ENCODE measurements at regions of chr16 and their contacts with region 1.

Region 1: GRCh38 chr16:20741554-20742285 is at the start of gene THUMPD1:
- DNase-seq: peak; percentile 88 to 97 (median 95)
- ATAC-seq: peak; percentile 97
- H3K4me3 ChIP-seq: peak within 1 kb of the TSS; percentile 100
- H3K4me3 Mint-ChIP-seq: peak within 1 kb of the TSS; percentile 93 to 98 (median 96)
- H3K27ac ChIP-seq: peak within 1 kb of the TSS; percentile 93
- H3K27ac Mint-ChIP-seq: peak within 1 kb of the TSS; percentile 90 to 99 (median 98)
- H3K4me1 ChIP-seq: peaks cover 12 to 25% of the 10 kb centered on the region in 2 donors
- H3K4me1 Mint-ChIP-seq: peaks cover 10 to 35% (median 26%) of the 10 kb centered on the region in 7 donors
- H3K27me3 ChIP-seq: no peaks in the 10 kb centered on the region
- H3K27me3 Mint-ChIP-seq: peaks cover 0 to 2% (median 0%) of the 10 kb centered on the region in 5 donors
- total RNA-seq, gene THUMPD1: 41.9 to 107 (median 72.5) TPM

Region 2: GRCh38 chr16:20014034-20014433 is 727.7 kb before region 1 on chr16:
- CTCF ChIA-PET with region 1: no interaction called
- POLR2A ChIA-PET with region 1: no interaction called
- intact Hi-C with region 1: no loop called
- DNase-seq: no peak
- ATAC-seq: no peak
- H3K4me3 ChIP-seq: no peak overlapping the region
- H3K4me3 Mint-ChIP-seq: no peak overlapping the region
- H3K27ac ChIP-seq: no peak overlapping the region
- H3K27ac Mint-ChIP-seq: no peak overlapping the region
- H3K4me1 ChIP-seq: no peaks in the 10 kb centered on the region
- H3K4me1 Mint-ChIP-seq: no peaks in the 10 kb centered on the region
- H3K27me3 ChIP-seq: no peaks in the 10 kb centered on the region
- H3K27me3 Mint-ChIP-seq: peaks cover 0 to 29% (median 17%) of the 10 kb centered on the region in 5 donors

Region 3: GRCh38 chr16:20675488-20676267 is 66.0 kb before region 1 on chr16:
- CTCF ChIA-PET with region 1: interaction called, 3 read pairs
- POLR2A ChIA-PET with region 1: interaction called, 13 read pairs
- intact Hi-C with region 1: loop called (anchors 1 to 2 kb)
- DNase-seq: peak in 7 of 9 donors; percentile 23 to 48 (median 41)
- ATAC-seq: peak; percentile 73
- H3K4me3 ChIP-seq: peak overlapping the region; percentile 72
- H3K4me3 Mint-ChIP-seq: peak overlapping the region; percentile 76 to 96 (median 91)
- H3K27ac ChIP-seq: peak overlapping the region; percentile 69
- H3K27ac Mint-ChIP-seq: peak overlapping the region; percentile 80 to 97 (median 91)
- H3K4me1 ChIP-seq: peaks cover 15 to 20% of the 10 kb centered on the region in 2 donors
- H3K4me1 Mint-ChIP-seq: peaks cover 20 to 47% (median 38%) of the 10 kb centered on the region in 7 donors
- H3K27me3 ChIP-seq: no peaks in the 10 kb centered on the region
- H3K27me3 Mint-ChIP-seq: no peaks in the 10 kb centered on the region

Region 4: GRCh38 chr16:20763461-20764232 is 21.9 kb after region 1 on chr16 and contains the start of gene ACSM3:
- CTCF ChIA-PET with region 1: interaction called, 3 read pairs
- POLR2A ChIA-PET with region 1: interaction called, 19 read pairs
- intact Hi-C with region 1: loop called (anchors 1 kb)
- DNase-seq: peak in 8 of 9 donors; percentile 51 to 84 (median 79)
- ATAC-seq: peak; percentile 99
- H3K4me3 ChIP-seq: peak within 1 kb of the TSS; percentile 72
- H3K4me3 Mint-ChIP-seq: peak within 1 kb of the TSS; percentile 80 to 97 (median 93)
- H3K27ac ChIP-seq: peak within 1 kb of the TSS; percentile 72
- H3K27ac Mint-ChIP-seq: peak within 1 kb of the TSS; percentile 90 to 96 (median 93)
- H3K4me1 ChIP-seq: peaks cover 4 to 13% of the 10 kb centered on the region in 2 donors
- H3K4me1 Mint-ChIP-seq: peaks cover 7 to 46% (median 31%) of the 10 kb centered on the region in 7 donors
- H3K27me3 ChIP-seq: no peaks in the 10 kb centered on the region
- H3K27me3 Mint-ChIP-seq: no peaks in the 10 kb centered on the region
- total RNA-seq, gene ACSM3: 3.0 to 10.9 (median 7.4) TPM

Region 5: DNA sequence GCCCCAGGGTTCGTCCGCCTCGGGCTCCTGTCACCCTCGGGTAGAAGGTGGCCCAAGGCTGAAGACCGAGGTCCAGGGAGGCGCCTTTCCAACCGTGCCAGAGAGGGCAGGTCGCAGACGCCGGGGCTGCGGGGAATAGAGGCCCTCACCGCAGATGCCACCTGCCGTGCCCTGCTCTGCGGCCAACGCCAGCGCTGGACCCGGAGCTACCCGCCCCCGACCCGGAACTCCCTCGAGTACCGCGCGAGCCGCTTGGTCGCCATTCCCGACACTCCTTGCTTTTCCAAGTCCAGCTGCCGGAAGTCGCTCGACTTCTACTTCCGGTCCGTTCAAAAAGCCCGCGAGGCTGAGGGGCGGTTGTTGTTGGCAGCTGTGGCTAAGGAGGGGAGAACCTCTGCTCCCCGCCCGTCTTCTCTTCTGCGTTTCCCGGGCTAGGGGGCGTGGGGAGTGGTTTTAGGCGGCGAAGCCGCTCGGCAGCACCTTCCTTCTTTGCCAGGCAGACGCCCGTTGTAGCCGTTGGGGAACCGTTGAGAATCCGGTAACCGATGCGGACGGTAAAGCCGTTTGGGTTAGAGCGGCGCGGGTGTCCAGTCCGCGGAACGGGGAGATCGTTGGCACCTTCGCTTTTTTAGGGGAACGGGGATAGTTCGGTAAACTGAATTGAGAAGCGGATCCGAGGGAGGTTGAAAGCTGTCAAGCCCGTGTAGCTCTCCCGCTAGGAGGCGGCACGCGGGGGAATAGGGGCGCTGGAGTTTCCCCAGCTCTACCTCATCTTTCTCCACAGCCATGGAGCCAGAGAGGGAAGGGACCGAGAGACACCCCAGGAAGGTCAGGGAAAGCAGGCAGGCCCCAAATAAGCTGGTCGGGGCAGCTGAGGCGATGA is 64.7 kb after region 1 on chr16 and contains the starts of genes ERI2 and REXO5:
- CTCF ChIA-PET with region 1: no interaction called
- POLR2A ChIA-PET with region 1: interaction called, 3 read pairs
- intact Hi-C with region 1: loop called (anchors 1 to 2 kb)
- DNase-seq: peak; percentile 47 to 77 (median 65)
- ATAC-seq: peak; percentile 92
- H3K4me3 ChIP-seq: peak within 1 kb of the TSS; percentile 91
- H3K4me3 Mint-ChIP-seq: peak within 1 kb of the TSS; percentile 93 to 100 (median 96)
- H3K27ac ChIP-seq: peak within 1 kb of the TSS; percentile 73
- H3K27ac Mint-ChIP-seq: peak within 1 kb of the TSS; percentile 60 to 99 (median 93)
- H3K4me1 ChIP-seq: peaks cover 8 to 10% of the 10 kb centered on the region in 2 donors
- H3K4me1 Mint-ChIP-seq: peaks cover 7 to 36% (median 22%) of the 10 kb centered on the region in 7 donors
- H3K27me3 ChIP-seq: no peaks in the 10 kb centered on the region
- H3K27me3 Mint-ChIP-seq: no peaks in the 10 kb centered on the region
- total RNA-seq, gene ERI2: 2.4 to 10.4 (median 3.6) TPM
- total RNA-seq, gene REXO5: 0.35 to 9.5 (median 1.6) TPM

Region 6: DNA sequence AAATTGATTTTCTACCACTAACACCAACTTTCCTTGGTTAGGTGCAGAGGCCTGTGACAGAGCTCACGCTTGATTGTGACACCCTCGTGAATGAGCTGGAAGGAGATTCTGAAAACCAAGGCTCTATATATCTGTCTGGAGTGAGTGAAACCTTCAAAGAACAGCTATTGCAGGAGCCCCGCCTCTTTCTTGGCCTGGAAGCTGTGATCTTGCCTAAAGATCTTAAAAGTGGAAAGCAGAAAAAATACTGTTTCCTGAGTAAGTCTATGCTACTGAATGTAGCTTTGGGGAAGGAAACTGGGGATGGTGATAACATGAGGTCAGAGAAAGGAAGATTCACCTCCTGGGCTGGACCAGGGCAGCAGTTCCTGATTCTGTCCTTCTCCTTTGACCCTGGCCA is 102.9 kb after region 1 on chr16:
- CTCF ChIA-PET with region 1: no interaction called
- POLR2A ChIA-PET with region 1: no interaction called
- intact Hi-C with region 1: loop called in 1 of 2 experiments (anchors 1 kb)
- DNase-seq: peak in 7 of 9 donors; percentile 18 to 42 (median 28)
- ATAC-seq: peak; percentile 67
- H3K4me3 ChIP-seq: peak overlapping the region; percentile 2
- H3K4me3 Mint-ChIP-seq: peak overlapping the region; percentile 26 to 80 (median 55)
- H3K27ac ChIP-seq: peak overlapping the region; percentile 48
- H3K27ac Mint-ChIP-seq: peak overlapping the region; percentile 63 to 93 (median 74)
- H3K4me1 ChIP-seq: peaks cover 18 to 22% of the 10 kb centered on the region in 2 donors
- H3K4me1 Mint-ChIP-seq: peaks cover 14 to 35% (median 25%) of the 10 kb centered on the region in 7 donors
- H3K27me3 ChIP-seq: no peaks in the 10 kb centered on the region
- H3K27me3 Mint-ChIP-seq: no peaks in the 10 kb centered on the region

Region 7: DNA sequence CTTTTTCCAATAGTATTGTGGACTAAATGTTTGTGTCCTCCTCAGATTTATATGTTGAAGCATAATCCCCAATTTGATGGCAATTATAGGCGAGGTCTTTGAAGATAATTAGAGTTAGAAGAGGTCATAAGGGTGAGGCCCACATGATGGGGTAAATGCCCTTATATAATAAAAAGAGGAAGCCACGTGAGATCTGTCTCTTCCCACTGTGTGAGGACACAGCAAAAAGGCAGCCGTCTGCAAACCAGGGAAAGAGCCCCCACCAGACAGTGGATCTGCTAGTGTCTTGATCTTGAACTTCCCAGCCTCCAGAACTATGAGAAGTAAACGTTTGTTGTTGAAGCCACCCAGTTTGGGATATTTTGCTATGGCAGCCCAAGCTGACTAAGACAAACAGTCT is 234.9 kb after region 1 on chr16:
- CTCF ChIA-PET with region 1: no interaction called
- POLR2A ChIA-PET with region 1: no interaction called
- intact Hi-C with region 1: no loop called
- DNase-seq: no peak
- ATAC-seq: no peak
- H3K4me3 ChIP-seq: no peak overlapping the region
- H3K4me3 Mint-ChIP-seq: no peak overlapping the region
- H3K27ac ChIP-seq: no peak overlapping the region
- H3K27ac Mint-ChIP-seq: no peak overlapping the region
- H3K4me1 ChIP-seq: no peaks in the 10 kb centered on the region
- H3K4me1 Mint-ChIP-seq: no peaks in the 10 kb centered on the region
- H3K27me3 ChIP-seq: no peaks in the 10 kb centered on the region
- H3K27me3 Mint-ChIP-seq: peaks cover 4 to 13% (median 5%) of the 10 kb centered on the region in 5 donors

Region 8: DNA sequence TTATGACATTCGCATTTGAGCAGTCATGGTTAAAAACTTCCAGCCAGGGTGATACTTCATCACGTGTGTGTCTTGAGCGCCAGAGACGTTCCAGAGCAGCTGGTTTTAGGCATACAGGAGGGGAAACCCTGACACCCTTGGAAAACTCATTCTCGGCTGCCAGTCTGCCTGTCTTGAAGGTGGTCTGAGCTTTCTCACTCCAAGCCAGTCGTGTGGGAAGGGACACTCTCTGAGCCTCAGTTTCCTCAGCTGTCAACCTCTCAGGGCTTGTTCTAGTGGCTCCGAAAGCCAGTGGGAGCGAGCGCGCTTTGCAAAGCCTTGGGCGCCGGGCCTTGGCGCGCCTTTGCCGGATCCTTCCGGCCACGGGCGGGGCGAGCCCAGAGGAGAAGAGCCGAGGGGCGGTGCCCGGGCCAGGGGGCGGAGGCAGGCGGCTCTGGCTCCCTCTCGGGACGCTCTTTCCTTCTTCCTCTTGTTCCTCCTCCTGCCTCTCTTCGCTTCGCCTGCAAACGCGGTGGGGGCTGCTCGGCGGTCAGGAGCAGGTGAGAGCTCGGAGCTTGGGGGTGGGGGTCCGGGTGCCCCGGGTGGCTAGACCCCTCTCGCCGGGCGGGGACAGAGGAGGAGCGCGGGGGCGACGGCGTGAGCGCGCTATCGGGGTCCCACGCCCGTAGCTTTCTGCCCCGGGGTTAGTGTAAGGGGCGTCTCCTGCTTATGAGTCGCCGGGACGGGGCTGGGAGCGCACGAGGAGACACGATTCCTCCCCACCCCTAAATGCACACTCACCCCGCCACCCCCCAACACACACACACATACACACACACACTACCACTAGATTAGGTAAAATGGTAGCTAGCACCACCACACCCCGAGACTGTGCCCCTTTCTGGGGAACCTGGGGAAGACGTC is 416.7 kb after region 1 on chr16 and contains the start of gene LDAF1:
- CTCF ChIA-PET with region 1: no interaction called
- POLR2A ChIA-PET with region 1: interaction called, 3 read pairs
- intact Hi-C with region 1: loop called in 1 of 2 experiments (anchors 1 kb)
- DNase-seq: peak; percentile 59 to 86 (median 74)
- ATAC-seq: peak; percentile 97
- H3K4me3 ChIP-seq: peak within 1 kb of the TSS; percentile 62
- H3K4me3 Mint-ChIP-seq: peak within 1 kb of the TSS; percentile 88 to 96 (median 94)
- H3K27ac ChIP-seq: peak within 1 kb of the TSS; percentile 65
- H3K27ac Mint-ChIP-seq: peak within 1 kb of the TSS; percentile 60 to 91 (median 71)
- H3K4me1 ChIP-seq: peaks cover 9 to 12% of the 10 kb centered on the region in 2 donors
- H3K4me1 Mint-ChIP-seq: peaks cover 10 to 35% (median 30%) of the 10 kb centered on the region in 7 donors
- H3K27me3 ChIP-seq: no peaks in the 10 kb centered on the region
- H3K27me3 Mint-ChIP-seq: no peaks in the 10 kb centered on the region
- total RNA-seq, gene LDAF1: 8.2 to 16.9 (median 11.0) TPM

Region 9: GRCh38 chr16:21523411-21524067 is 781.8 kb after region 1 on chr16:
- CTCF ChIA-PET with region 1: no interaction called
- POLR2A ChIA-PET with region 1: no interaction called
- intact Hi-C with region 1: loop called in 1 of 2 experiments (anchors 2 kb)
- DNase-seq: no peak
- ATAC-seq: no peak
- H3K4me3 ChIP-seq: no peak overlapping the region
- H3K4me3 Mint-ChIP-seq: peak overlapping the region in 2 of 10 donors; percentile 29 to 56
- H3K27ac ChIP-seq: no peak overlapping the region
- H3K27ac Mint-ChIP-seq: no peak overlapping the region
- H3K4me1 ChIP-seq: no peaks in the 10 kb centered on the region
- H3K4me1 Mint-ChIP-seq: peaks cover 2 to 9% (median 6%) of the 10 kb centered on the region in 7 donors
- H3K27me3 ChIP-seq: no peaks in the 10 kb centered on the region
- H3K27me3 Mint-ChIP-seq: peaks cover 0 to 7% (median 0%) of the 10 kb centered on the region in 5 donors